CD4-positive, alpha-beta T cell (primary cell): ENCODE measurements at regions of chr6 and their contacts with region 1.

Region 1: GRCh38 chr6:1609648-1610496 is at the start of gene FOXC1:
- DNase-seq: peak in 4 of 14 experiments; percentile 32 to 54 (median 44)
- ATAC-seq: no peak
- H3K4me3 ChIP-seq: peak within 1 kb of the TSS; percentile 31
- H3K4me3 Mint-ChIP-seq: peak within 1 kb of the TSS; percentile 85
- H3K27ac ChIP-seq: no peak within 1 kb of the TSS
- H3K27ac Mint-ChIP-seq: no peak within 1 kb of the TSS
- H3K4me1 ChIP-seq: peaks cover 72% of the 10 kb centered on the region
- H3K4me1 Mint-ChIP-seq: peaks cover 62% of the 10 kb centered on the region
- H3K27me3 ChIP-seq: peaks cover 68 to 77% of the 10 kb centered on the region in 2 experiments
- H3K27me3 Mint-ChIP-seq: peaks cover 70% of the 10 kb centered on the region
- CTCF ChIP-seq: no peak
- total RNA-seq, gene FOXC1: not detected

Region 2: GRCh38 chr6:2448820-2449571 is 839.1 kb after region 1 on chr6:
- CTCF ChIA-PET with region 1: no interaction called
- POLR2A ChIA-PET with region 1: no interaction called
- intact Hi-C with region 1: loop called in 1 of 2 experiments (anchors 10 kb)
- DNase-seq: peak in 3 of 14 experiments; percentile 12 to 47 (median 42)
- ATAC-seq: no peak
- H3K4me3 ChIP-seq: no peak overlapping the region
- H3K4me3 Mint-ChIP-seq: peak overlapping the region; percentile 21
- H3K27ac ChIP-seq: no peak overlapping the region
- H3K27ac Mint-ChIP-seq: no peak overlapping the region
- H3K4me1 ChIP-seq: peaks cover 4% of the 10 kb centered on the region
- H3K4me1 Mint-ChIP-seq: no peaks in the 10 kb centered on the region
- H3K27me3 ChIP-seq: no peaks in the 10 kb centered on the region
- H3K27me3 Mint-ChIP-seq: no peaks in the 10 kb centered on the region
- CTCF ChIP-seq: no peak